Gastrocnemius medialis (tissue), 4 donors: ENCODE measurements at regions of chr1 and their contacts with region 1.

Region 1: GRCh38 chr1:23634842-23635651 is 56.6 kb upstream of the RPL11 start:
- DNase-seq: peak in 1 of 2 donors; percentile 65
- ATAC-seq: peak; percentile 38 to 75
- H3K4me3 ChIP-seq: peak overlapping the region; percentile 23 to 54 (median 50)
- H3K27ac ChIP-seq: peak overlapping the region; percentile 56 to 75 (median 73)
- H3K4me1 ChIP-seq: peaks cover 22% of the 10 kb centered on the region in 2 donors
- H3K27me3 ChIP-seq: no peaks in the 10 kb centered on the region
- CTCF ChIP-seq: peak; percentile 67 to 90 (median 84)
- POLR2A ChIP-seq: no peak

Region 2: DNA sequence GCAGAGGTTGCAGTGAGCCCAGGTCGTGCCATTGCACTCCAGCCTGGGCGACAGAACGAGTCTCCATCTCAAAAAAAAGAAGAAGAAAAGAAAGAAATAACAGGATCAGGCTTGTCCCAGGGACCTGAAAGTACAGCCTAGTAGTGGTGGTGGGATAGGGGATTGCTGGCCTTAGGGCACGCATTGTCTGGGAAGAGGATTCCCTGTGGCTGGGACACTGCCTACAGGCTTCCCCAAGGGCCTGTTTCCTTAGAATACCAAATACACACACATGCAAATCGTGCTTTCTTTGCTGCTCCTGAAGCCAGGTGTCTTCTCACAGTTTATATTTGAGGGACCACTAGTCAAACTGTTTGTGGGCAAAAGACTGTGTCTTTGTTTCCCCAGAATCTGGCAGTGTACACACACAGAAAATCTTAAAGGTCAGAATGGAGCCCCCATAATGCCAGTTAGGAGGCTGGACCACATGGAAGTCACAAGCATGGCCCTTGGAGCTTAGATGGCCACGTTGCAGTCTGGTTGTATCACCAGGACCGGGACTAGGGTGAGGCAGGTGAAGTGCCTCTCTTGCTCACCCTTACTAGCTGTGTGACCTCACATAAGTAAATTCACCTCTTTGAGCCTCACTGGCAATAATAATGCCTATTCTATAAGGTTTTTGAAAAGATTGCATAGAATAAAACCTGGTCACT is 138.4 kb before region 1 on chr1:
- in situ Hi-C with region 1: no loop called
- intact Hi-C with region 1: loop called (anchors 1 kb)
- DNase-seq: no peak
- ATAC-seq: peak; percentile 13 to 17
- H3K4me3 ChIP-seq: no peak overlapping the region
- H3K27ac ChIP-seq: no peak overlapping the region
- H3K4me1 ChIP-seq: peaks cover 0 to 3% of the 10 kb centered on the region in 2 donors
- H3K27me3 ChIP-seq: no peaks in the 10 kb centered on the region
- CTCF ChIP-seq: no peak
- POLR2A ChIP-seq: no peak

Region 3: GRCh38 chr1:23591460-23592208 is 43.4 kb before region 1 on chr1:
- in situ Hi-C with region 1: no loop called
- intact Hi-C with region 1: loop called (anchors 2 kb)
- DNase-seq: peak in 1 of 2 donors; percentile 31
- ATAC-seq: no peak
- H3K4me3 ChIP-seq: no peak overlapping the region
- H3K27ac ChIP-seq: peak overlapping the region; percentile 4 to 64 (median 48)
- H3K4me1 ChIP-seq: peaks cover 24 to 35% of the 10 kb centered on the region in 2 donors
- H3K27me3 ChIP-seq: no peaks in the 10 kb centered on the region
- CTCF ChIP-seq: no peak
- POLR2A ChIP-seq: no peak